GM12878 (cell line): ENCODE measurements at regions of chr6 and their contacts with region 1.

Region 1: GRCh38 chr6:137631323-137631722 is 137.1 kb upstream of the OLIG3 start:
- DNase-seq: no peak
- ATAC-seq: peak; percentile 81
- H3K4me3 ChIP-seq: no peak overlapping the region
- H3K27ac ChIP-seq: peak overlapping the region; percentile 76
- H3K4me1 ChIP-seq: peaks cover 46% of the 10 kb centered on the region
- H3K27me3 ChIP-seq: no peaks in the 10 kb centered on the region
- CTCF ChIP-seq: no peak
- EP300 ChIP-seq: no peak
- POLR2A ChIP-seq: no peak
- RAD21 ChIP-seq: no peak

Region 2: GRCh38 chr6:137378090-137378369 is 253.3 kb before region 1 on chr6:
- CTCF ChIA-PET with region 1: no interaction called
- POLR2A ChIA-PET with region 1: no interaction called
- RAD21 ChIA-PET with region 1: no interaction called
- SMC1A ChIA-PET with region 1: no interaction called
- in situ Hi-C with region 1: no loop called
- intact Hi-C with region 1: no loop called
- DNase-seq: no peak
- ATAC-seq: no peak
- H3K4me3 ChIP-seq: no peak overlapping the region
- H3K27ac ChIP-seq: no peak overlapping the region
- H3K4me1 ChIP-seq: no peaks in the 10 kb centered on the region
- H3K27me3 ChIP-seq: no peaks in the 10 kb centered on the region
- CTCF ChIP-seq: no peak
- EP300 ChIP-seq: no peak
- POLR2A ChIP-seq: no peak
- RAD21 ChIP-seq: no peak

Region 3: DNA sequence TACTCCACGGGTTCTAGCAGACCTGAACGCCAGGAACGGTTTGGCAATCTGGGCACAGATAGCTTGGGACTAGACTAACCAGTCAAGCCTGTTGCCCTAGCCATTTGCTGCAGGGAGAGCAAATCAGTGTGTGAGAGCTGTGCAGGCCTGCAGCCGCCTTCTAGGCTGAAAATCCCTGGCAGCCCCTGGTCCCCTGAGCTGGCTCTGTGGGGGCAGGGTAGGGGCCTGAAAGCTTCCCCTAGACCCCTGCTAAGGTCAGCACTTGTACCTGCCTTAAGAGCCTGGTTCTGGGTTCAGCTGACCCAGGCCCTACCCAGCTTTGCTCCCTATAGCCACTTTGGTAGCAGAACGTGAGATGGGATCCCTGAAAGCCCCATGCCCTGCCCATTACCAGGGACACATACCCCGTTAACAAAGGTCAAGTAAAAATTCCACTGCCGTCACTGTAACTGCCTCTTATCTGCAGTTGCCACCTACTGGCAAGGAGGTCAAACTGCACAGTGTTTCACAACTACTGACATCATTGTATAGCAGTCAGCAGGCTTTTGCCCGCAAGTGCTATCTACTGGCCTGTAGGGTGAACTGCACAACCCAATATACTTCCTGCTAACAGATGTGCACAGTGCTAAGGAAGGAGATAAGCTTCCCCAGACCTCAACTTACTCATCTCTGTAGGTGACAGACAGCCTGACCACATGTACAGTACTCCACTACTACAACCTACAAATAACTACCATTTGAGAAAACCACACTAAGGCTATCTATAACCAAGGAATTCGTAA is 42.1 kb before region 1 on chr6:
- CTCF ChIA-PET with region 1: interaction called, 8 read pairs
- POLR2A ChIA-PET with region 1: no interaction called
- RAD21 ChIA-PET with region 1: interaction called, 3 read pairs
- SMC1A ChIA-PET with region 1: interaction called, 10 read pairs
- in situ Hi-C with region 1: no loop called
- intact Hi-C with region 1: loop called (anchors 1 kb)
- DNase-seq: peak; percentile 74
- ATAC-seq: peak; percentile 100
- H3K4me3 ChIP-seq: 0 out of 2 replicates have a peak overlapping the region, but pooled peaks have one; percentile 19
- H3K27ac ChIP-seq: no peak overlapping the region
- H3K4me1 ChIP-seq: peaks cover 2% of the 10 kb centered on the region; the same call in 1 of the 2 replicates
- H3K27me3 ChIP-seq: no peaks in the 10 kb centered on the region
- CTCF ChIP-seq: peak; percentile 62 to 98 (median 81)
- EP300 ChIP-seq: no peak
- POLR2A ChIP-seq: no peak
- RAD21 ChIP-seq: peak; percentile 72

Region 4: GRCh38 chr6:137736048-137736818 is 104.9 kb after region 1 on chr6:
- CTCF ChIA-PET with region 1: no interaction called
- POLR2A ChIA-PET with region 1: no interaction called
- RAD21 ChIA-PET with region 1: no interaction called
- SMC1A ChIA-PET with region 1: no interaction called
- in situ Hi-C with region 1: no loop called
- intact Hi-C with region 1: no loop called
- DNase-seq: no peak
- ATAC-seq: peak; percentile 67
- H3K4me3 ChIP-seq: no peak overlapping the region
- H3K27ac ChIP-seq: no peak overlapping the region
- H3K4me1 ChIP-seq: peaks cover 12% of the 10 kb centered on the region
- H3K27me3 ChIP-seq: no peaks in the 10 kb centered on the region
- CTCF ChIP-seq: no peak
- EP300 ChIP-seq: no peak; a peak in 1 of 4 replicates
- POLR2A ChIP-seq: peak; percentile 35; the same call in 1 of the 2 replicates
- RAD21 ChIP-seq: no peak

Region 5: DNA sequence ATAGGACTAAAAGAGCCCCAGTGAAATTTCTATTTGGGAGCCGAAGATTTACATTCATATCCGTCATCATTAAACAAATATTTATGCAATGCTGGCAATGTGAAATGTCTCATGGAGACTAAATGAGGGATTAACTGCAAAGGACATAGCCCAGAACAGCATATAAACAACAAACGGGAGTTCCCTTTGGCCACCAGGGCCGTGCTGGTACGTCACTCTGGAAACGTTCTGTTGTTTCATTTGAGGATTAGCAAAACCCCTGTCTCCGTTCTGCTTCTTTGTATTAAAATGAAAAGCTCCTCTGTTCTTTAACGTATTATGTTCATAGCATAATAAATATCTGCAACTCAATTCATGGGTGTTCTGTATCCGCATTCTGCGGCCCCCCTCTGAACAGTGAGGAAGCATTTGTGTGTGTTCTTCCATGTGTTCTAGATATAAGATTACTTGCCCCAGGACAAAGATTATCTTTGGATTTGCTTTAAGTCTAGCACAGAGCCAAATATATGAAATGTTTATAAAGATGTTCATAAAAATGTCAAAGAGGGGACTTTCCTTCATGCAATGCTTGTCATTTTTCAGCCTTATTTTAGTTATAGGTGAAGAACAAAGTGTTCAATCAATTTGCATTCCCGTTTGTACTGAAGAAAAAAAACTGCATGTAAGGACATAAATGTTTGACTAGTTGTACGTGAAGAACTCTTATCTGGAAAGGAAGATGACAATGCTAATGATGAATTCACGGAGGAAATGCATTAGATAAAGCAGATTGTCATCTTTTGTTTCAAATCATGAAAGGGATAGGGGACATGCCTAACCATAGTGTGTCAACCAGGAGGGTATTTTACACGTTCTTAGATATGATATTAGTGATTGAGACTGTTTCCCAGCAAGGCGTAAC is 145.7 kb after region 1 on chr6:
- CTCF ChIA-PET with region 1: no interaction called
- POLR2A ChIA-PET with region 1: no interaction called
- RAD21 ChIA-PET with region 1: no interaction called
- SMC1A ChIA-PET with region 1: no interaction called
- in situ Hi-C with region 1: no loop called
- intact Hi-C with region 1: no loop called
- DNase-seq: no peak
- ATAC-seq: no peak
- H3K4me3 ChIP-seq: no peak overlapping the region
- H3K27ac ChIP-seq: no peak overlapping the region
- H3K4me1 ChIP-seq: no peaks in the 10 kb centered on the region
- H3K27me3 ChIP-seq: no peaks in the 10 kb centered on the region
- CTCF ChIP-seq: no peak
- EP300 ChIP-seq: no peak
- POLR2A ChIP-seq: no peak
- RAD21 ChIP-seq: no peak

Region 6: GRCh38 chr6:137846772-137847313 is 215.5 kb after region 1 on chr6:
- CTCF ChIA-PET with region 1: no interaction called
- POLR2A ChIA-PET with region 1: no interaction called
- RAD21 ChIA-PET with region 1: no interaction called
- SMC1A ChIA-PET with region 1: no interaction called
- in situ Hi-C with region 1: no loop called
- intact Hi-C with region 1: no loop called
- DNase-seq: no peak
- ATAC-seq: peak; percentile 79
- H3K4me3 ChIP-seq: no peak overlapping the region
- H3K27ac ChIP-seq: no peak overlapping the region
- H3K4me1 ChIP-seq: peaks cover 20% of the 10 kb centered on the region
- H3K27me3 ChIP-seq: no peaks in the 10 kb centered on the region
- CTCF ChIP-seq: no peak
- EP300 ChIP-seq: no peak
- POLR2A ChIP-seq: no peak
- RAD21 ChIP-seq: no peak